GM12878 (cell line): ENCODE measurements at regions of chr10 and their contacts with region 1.

Region 1: DNA sequence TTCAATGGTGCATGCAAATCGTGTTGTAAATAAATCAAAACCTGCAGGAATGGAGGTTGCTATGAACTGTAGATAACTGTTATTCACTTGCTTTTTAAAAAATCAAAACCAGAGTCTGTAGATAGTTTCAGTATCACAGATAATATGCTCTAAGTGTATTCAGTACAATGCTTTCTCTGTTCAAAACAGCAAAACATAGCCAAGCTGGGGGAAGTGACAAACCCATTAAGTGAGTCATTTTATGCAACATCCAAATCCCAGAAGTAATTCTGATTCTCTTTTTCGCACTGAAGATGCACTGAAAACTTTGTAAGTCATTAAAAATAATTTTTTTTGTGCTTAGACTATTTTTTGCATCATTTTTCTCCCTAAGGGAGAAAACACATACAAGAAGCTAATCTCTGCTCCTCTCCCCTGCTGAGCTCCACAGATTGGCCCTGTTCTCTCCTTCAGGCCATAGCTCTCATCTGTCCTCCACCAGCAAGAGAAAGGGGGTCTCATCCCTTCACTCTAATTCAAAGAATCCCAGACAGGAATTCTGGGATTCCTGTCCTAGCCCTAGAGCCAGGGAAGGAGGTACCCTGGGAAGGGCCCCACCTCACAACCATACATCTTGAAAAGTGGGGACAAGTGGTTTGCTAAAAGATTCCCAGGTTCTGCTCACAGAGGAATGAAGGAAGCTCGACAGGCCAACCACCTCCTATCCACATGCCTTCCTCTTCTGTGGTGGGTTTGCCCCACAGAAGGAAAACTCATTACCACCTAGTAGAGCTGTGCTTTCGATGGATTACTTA is 4.9 kb downstream of the PRTFDC1 start:
- DNase-seq: peak; percentile 51
- ATAC-seq: peak; percentile 79
- H3K4me3 ChIP-seq: no peak overlapping the region
- H3K27ac ChIP-seq: no peak overlapping the region
- H3K4me1 ChIP-seq: peaks cover 3% of the 10 kb centered on the region; the same call in 1 of the 2 replicates
- H3K27me3 ChIP-seq: no peaks in the 10 kb centered on the region
- CTCF ChIP-seq: no peak
- EP300 ChIP-seq: peak; percentile 82 to 87; a peak in 3 of 4 replicates
- POLR2A ChIP-seq: no peak
- RAD21 ChIP-seq: no peak

Region 2: GRCh38 chr10:24652381-24652957 is 295.0 kb before region 1 on chr10:
- CTCF ChIA-PET with region 1: interaction called, 5 read pairs
- POLR2A ChIA-PET with region 1: no interaction called
- RAD21 ChIA-PET with region 1: interaction called, 3 read pairs
- SMC1A ChIA-PET with region 1: interaction called, 9 read pairs
- in situ Hi-C with region 1: no loop called
- intact Hi-C with region 1: loop called (anchors 1 kb)
- DNase-seq: peak; percentile 62
- ATAC-seq: peak; percentile 93
- H3K4me3 ChIP-seq: peak overlapping the region; percentile 46
- H3K27ac ChIP-seq: peak overlapping the region; percentile 76
- H3K4me1 ChIP-seq: peaks cover 15% of the 10 kb centered on the region
- H3K27me3 ChIP-seq: no peaks in the 10 kb centered on the region
- CTCF ChIP-seq: no peak
- EP300 ChIP-seq: peak; percentile 42 to 82; a peak in 3 of 4 replicates
- POLR2A ChIP-seq: no peak
- RAD21 ChIP-seq: no peak

Region 3: GRCh38 chr10:24908793-24909423 is 38.6 kb before region 1 on chr10:
- CTCF ChIA-PET with region 1: interaction called, 6 read pairs
- POLR2A ChIA-PET with region 1: interaction called, 4 read pairs
- RAD21 ChIA-PET with region 1: interaction called, 45 read pairs
- SMC1A ChIA-PET with region 1: interaction called, 28 read pairs
- in situ Hi-C with region 1: no loop called
- intact Hi-C with region 1: no loop called
- DNase-seq: no peak
- ATAC-seq: peak; percentile 65
- H3K4me3 ChIP-seq: no peak overlapping the region
- H3K27ac ChIP-seq: no peak overlapping the region
- H3K4me1 ChIP-seq: no peaks in the 10 kb centered on the region
- H3K27me3 ChIP-seq: no peaks in the 10 kb centered on the region
- CTCF ChIP-seq: no peak
- EP300 ChIP-seq: no peak
- POLR2A ChIP-seq: no peak
- RAD21 ChIP-seq: no peak

Region 4: GRCh38 chr10:24915304-24915703 is 32.2 kb before region 1 on chr10:
- CTCF ChIA-PET with region 1: interaction called, 4 read pairs
- POLR2A ChIA-PET with region 1: interaction called, 4 read pairs
- RAD21 ChIA-PET with region 1: interaction called, 5 read pairs
- SMC1A ChIA-PET with region 1: interaction called, 21 read pairs
- in situ Hi-C with region 1: no loop called
- intact Hi-C with region 1: no loop called
- DNase-seq: no peak
- ATAC-seq: no peak
- H3K4me3 ChIP-seq: no peak overlapping the region
- H3K27ac ChIP-seq: no peak overlapping the region
- H3K4me1 ChIP-seq: no peaks in the 10 kb centered on the region
- H3K27me3 ChIP-seq: no peaks in the 10 kb centered on the region
- CTCF ChIP-seq: no peak
- EP300 ChIP-seq: no peak
- POLR2A ChIP-seq: no peak
- RAD21 ChIP-seq: no peak

Region 5: DNA sequence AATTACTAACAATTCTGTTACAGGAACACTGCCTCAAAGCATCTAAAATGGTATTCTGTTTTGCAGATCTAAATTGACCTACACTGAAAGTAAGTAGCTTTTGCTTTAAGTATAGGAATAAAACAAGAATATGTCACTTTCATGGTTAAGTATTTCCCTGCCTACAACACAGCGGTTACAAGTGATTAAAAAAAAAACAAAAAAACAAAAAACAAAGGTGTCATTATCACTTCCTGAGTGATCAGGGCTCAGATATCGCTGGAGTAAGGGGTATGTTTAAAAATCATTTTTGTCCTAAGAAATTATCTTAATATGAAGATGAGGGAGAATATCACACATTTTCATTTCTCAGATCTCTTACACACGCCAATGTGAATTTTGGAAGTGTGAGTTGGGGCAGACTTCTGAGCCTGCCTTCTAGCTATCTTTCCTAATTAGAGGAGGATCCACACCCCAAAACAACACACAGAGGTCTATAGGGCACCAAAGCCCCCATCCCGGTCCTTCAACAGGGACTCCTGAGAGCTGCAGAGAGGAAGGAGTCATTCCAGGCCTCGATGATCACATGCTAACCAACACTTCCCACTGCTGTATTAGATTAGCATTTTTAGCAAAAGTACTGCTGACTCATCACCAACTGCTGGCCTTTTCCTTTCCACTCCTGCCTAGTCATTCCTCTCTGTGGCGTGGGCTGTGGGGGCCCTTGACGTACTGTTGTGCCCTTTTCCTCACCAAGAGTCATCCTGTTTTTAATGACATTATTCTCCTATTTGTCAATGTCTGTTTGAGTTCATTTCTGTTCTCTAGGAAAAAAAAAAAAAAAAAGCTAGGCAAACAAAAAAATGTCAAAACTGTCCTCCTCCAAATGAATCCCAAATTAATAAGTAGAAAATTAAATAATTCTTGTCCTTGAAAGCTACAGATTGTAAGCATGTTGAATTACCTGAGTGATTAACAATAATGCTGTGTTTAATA is 26.3 kb before region 1 on chr10:
- CTCF ChIA-PET with region 1: interaction called, 56 read pairs
- POLR2A ChIA-PET with region 1: interaction called, 6 read pairs
- RAD21 ChIA-PET with region 1: interaction called, 274 read pairs
- SMC1A ChIA-PET with region 1: interaction called, 11 read pairs
- in situ Hi-C with region 1: no loop called
- intact Hi-C with region 1: no loop called
- DNase-seq: peak; percentile 67
- ATAC-seq: peak; percentile 95
- H3K4me3 ChIP-seq: no peak overlapping the region
- H3K27ac ChIP-seq: peak overlapping the region; percentile 69
- H3K4me1 ChIP-seq: peaks cover 9% of the 10 kb centered on the region
- H3K27me3 ChIP-seq: no peaks in the 10 kb centered on the region
- CTCF ChIP-seq: no peak
- EP300 ChIP-seq: peak; percentile 86 to 91
- POLR2A ChIP-seq: no peak
- RAD21 ChIP-seq: peak; percentile 12; the same call in 1 of the 2 replicates

Region 6: GRCh38 chr10:24935504-24936292 is 11.8 kb before region 1 on chr10:
- CTCF ChIA-PET with region 1: interaction called, 56 read pairs
- POLR2A ChIA-PET with region 1: interaction called, 103 read pairs
- RAD21 ChIA-PET with region 1: interaction called, 274 read pairs
- SMC1A ChIA-PET with region 1: interaction called, 236 read pairs
- in situ Hi-C with region 1: no loop called
- intact Hi-C with region 1: loop called (anchors 1 kb)
- DNase-seq: no peak
- ATAC-seq: peak; percentile 29
- H3K4me3 ChIP-seq: no peak overlapping the region
- H3K27ac ChIP-seq: no peak overlapping the region
- H3K4me1 ChIP-seq: no peaks in the 10 kb centered on the region
- H3K27me3 ChIP-seq: no peaks in the 10 kb centered on the region
- CTCF ChIP-seq: no peak
- EP300 ChIP-seq: no peak
- POLR2A ChIP-seq: no peak
- RAD21 ChIP-seq: no peak